Activated naive CD4-positive, alpha-beta T cell treated with anti-CD3 and anti-CD28 coated beads for 36 hours (primary cell): ENCODE measurements at regions of chr2 and their contacts with region 1.

Region 1: DNA sequence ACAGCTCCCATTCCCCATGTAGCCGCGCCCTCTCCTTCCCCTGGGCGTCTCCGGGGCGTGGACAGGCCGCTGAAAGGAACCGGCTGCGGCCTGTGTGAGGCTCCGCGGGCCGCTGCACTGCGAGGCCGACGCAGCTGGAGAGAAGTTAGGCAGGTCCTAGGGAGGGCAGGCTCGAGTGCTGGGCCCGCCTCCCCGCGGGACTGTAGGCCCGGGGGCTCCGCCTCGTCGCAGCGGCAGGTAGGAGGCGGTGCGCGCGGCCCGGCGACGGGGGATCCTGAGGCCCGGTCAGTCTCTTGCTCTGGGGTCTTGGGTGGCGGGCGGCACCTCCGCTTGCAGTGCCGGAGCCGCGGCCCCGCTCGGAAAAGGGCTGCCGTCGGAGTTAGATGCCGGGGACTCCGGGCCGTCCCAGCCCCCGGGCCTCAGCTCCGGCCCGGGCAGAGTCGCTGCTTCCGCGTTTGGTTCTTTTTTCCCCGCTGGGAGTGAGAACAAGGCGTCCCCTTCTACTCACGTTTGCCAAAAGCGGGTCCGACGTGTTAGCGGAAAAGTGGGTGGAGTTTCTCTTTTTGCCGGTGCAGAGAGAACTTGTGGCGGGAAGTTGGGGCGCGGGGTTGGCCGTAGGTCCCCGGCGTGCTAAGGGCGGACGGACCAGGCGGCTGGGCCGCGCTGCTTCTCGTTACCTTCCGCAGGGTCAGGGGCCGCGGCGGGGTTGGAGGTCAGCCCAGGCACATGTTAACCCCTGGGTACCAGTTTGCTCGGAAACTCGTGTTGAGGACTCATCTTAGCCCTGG is at the start of gene VRK2:
- DNase-seq: peak; percentile 90
- H3K4me3 Mint-ChIP-seq: peak within 1 kb of the TSS; percentile 88
- H3K27ac Mint-ChIP-seq: peak within 1 kb of the TSS; percentile 93
- H3K4me1 Mint-ChIP-seq: peaks cover 45% of the 10 kb centered on the region
- H3K27me3 Mint-ChIP-seq: no peaks in the 10 kb centered on the region
- total RNA-seq, gene VRK2: 14.7 to 16.1 TPM

Region 2: GRCh38 chr2:57906152-57906732 is 140.5 kb before region 1 on chr2:
- CTCF ChIA-PET with region 1: interaction called, 3 read pairs
- intact Hi-C with region 1: loop called (anchors 1 kb)
- DNase-seq: no peak
- H3K4me3 Mint-ChIP-seq: no peak overlapping the region
- H3K27ac Mint-ChIP-seq: no peak overlapping the region
- H3K4me1 Mint-ChIP-seq: peaks cover 9% of the 10 kb centered on the region
- H3K27me3 Mint-ChIP-seq: peaks cover 2% of the 10 kb centered on the region

Region 3: DNA sequence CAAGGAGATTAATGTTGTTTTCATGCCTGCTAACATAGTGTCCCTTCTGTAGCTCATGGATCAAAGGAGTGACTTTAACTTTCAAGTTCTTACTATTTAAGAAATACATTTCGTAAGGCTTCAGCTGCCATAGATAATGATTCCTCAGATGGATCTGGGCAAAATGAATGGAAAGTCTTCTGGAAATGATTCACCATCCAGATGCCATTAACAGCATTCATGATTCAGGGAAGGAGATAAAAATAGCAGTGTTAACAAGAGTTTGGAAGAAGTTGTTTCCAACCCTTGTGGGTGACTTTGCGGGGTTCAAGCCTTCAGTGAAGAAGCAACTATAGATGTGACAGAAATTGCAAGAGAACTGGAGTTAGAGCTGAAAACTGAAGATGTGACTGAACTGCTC is 16.9 kb after region 1 on chr2:
- CTCF ChIA-PET with region 1: interaction called, 3 read pairs
- intact Hi-C with region 1: loop called (anchors 1 kb)
- DNase-seq: no peak
- H3K4me3 Mint-ChIP-seq: no peak overlapping the region
- H3K27ac Mint-ChIP-seq: no peak overlapping the region
- H3K4me1 Mint-ChIP-seq: peaks cover 22% of the 10 kb centered on the region
- H3K27me3 Mint-ChIP-seq: no peaks in the 10 kb centered on the region

Region 4: GRCh38 chr2:58146707-58147106 is 99.9 kb after region 1 on chr2:
- CTCF ChIA-PET with region 1: no interaction called
- intact Hi-C with region 1: loop called (anchors 1 kb)
- DNase-seq: peak; percentile 32
- H3K4me3 Mint-ChIP-seq: no peak overlapping the region
- H3K27ac Mint-ChIP-seq: no peak overlapping the region
- H3K4me1 Mint-ChIP-seq: peaks cover 9% of the 10 kb centered on the region
- H3K27me3 Mint-ChIP-seq: no peaks in the 10 kb centered on the region

Region 5: GRCh38 chr2:58221909-58222308 is 175.1 kb after region 1 on chr2:
- CTCF ChIA-PET with region 1: no interaction called
- intact Hi-C with region 1: no loop called
- DNase-seq: no peak
- H3K4me3 Mint-ChIP-seq: no peak overlapping the region
- H3K27ac Mint-ChIP-seq: no peak overlapping the region
- H3K4me1 Mint-ChIP-seq: no peaks in the 10 kb centered on the region
- H3K27me3 Mint-ChIP-seq: no peaks in the 10 kb centered on the region

Region 6: DNA sequence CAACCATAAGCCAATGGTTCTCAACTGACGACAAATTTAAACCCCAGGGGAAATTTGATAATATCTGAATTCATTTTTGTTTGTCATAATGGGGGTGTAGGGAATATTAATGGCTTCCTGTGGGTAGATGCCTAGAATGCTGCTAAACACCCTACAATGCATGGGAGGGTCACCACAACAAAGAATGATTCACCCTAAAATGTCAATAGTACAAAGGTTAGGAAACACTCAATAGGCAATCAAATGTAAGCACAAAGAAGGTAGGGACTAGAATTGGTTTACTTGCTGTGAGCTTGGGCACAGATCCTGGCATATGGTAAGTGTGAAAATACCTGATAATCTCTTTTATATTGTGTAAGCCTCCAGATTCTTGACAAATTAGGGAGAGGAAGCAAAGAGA is 214.4 kb after region 1 on chr2:
- CTCF ChIA-PET with region 1: no interaction called
- intact Hi-C with region 1: loop called (anchors 1 kb)
- DNase-seq: no peak
- H3K4me3 Mint-ChIP-seq: no peak overlapping the region
- H3K27ac Mint-ChIP-seq: no peak overlapping the region
- H3K4me1 Mint-ChIP-seq: peaks cover 6% of the 10 kb centered on the region
- H3K27me3 Mint-ChIP-seq: peaks cover 10% of the 10 kb centered on the region

Region 7: DNA sequence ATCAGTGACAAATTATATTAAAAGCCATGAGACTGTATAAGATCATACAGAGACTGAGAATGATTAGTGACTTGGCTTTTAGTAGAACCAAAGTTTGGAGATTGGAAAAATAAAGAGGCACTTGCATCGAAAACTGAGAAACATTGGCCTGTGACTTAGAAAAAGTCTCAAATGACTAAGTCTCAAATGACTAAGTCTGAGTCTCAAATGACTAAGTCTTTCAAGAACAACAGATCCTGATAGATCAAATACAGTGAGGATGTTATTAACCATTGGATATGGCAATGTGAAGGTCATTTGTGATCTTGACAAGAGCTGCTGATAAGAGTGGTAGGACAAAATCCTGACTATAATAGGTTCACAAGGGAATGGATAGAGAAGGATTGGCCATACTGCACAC is 329.8 kb after region 1 on chr2:
- CTCF ChIA-PET with region 1: no interaction called
- intact Hi-C with region 1: loop called (anchors 10 kb)
- DNase-seq: no peak
- H3K4me3 Mint-ChIP-seq: no peak overlapping the region
- H3K27ac Mint-ChIP-seq: no peak overlapping the region
- H3K4me1 Mint-ChIP-seq: peaks cover 12% of the 10 kb centered on the region
- H3K27me3 Mint-ChIP-seq: peaks cover 2% of the 10 kb centered on the region

Region 8: DNA sequence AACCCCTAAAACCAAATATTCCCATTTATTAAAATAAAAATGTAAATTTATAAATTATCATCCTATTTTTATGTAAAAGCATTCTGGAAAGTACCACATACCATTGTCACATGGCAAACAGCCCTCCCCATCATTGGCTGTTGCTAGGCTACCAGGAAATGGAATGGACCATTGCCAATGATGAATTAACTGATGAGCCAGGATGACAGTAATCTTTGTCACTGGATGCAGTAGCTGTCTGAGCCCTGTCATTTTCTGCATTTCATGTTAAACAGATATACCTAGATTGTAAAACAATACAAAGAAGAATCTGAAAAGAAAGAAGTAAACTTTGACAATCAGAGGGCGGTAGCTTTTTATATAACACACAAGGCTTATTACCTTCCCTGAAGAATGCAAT is 1865.3 kb after region 1 on chr2:
- CTCF ChIA-PET with region 1: no interaction called
- intact Hi-C with region 1: loop called (anchors 10 kb)
- DNase-seq: no peak
- H3K4me3 Mint-ChIP-seq: no peak overlapping the region
- H3K27ac Mint-ChIP-seq: no peak overlapping the region
- H3K4me1 Mint-ChIP-seq: peaks cover 18% of the 10 kb centered on the region
- H3K27me3 Mint-ChIP-seq: no peaks in the 10 kb centered on the region